ENCODE measurements at regions of chr10 and their contacts with region 1.

Region 1: GRCh38 chr10:12299222-12299965 is 50.0 kb upstream of the CAMK1D start:
- DNase-seq: no peak
- H3K4me3 ChIP-seq: no peak overlapping the region
- CTCF ChIP-seq: no peak

Region 2: DNA sequence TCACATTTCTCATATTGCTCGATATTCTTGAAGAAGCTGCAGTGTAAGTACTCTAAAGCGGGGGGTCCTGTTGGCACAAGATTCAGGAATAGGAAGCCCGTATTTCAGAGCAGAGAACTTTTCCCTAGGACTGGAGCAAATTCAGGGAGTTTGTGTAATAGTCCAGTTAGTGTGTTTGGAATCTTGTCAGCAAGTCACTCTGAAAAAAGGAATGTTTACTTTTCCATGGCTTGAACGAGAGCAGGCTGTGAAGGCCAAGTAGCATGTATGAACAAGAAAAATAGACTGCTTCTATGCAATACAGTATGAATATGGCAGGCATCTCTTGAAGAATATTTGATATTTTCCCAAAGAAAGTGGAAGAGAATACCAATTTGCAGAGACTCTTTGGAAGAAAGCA is 63.6 kb before region 1 on chr10:
- in situ Hi-C with region 1: loop called (anchors 5 kb)
- DNase-seq: no peak
- H3K4me3 ChIP-seq: no peak overlapping the region
- CTCF ChIP-seq: no peak

Measured in astrocyte of the cerebellum (primary cell).